Activated CD4-positive, alpha-beta T cell treated with anti-CD3 and anti-CD28 coated beads, Interleukin-2, amount 10 ng/mL, durations not matched to agents 24 days and 14 days (primary cell): ENCODE measurements at regions of chr1 and their contacts with region 1.

Region 1: DNA sequence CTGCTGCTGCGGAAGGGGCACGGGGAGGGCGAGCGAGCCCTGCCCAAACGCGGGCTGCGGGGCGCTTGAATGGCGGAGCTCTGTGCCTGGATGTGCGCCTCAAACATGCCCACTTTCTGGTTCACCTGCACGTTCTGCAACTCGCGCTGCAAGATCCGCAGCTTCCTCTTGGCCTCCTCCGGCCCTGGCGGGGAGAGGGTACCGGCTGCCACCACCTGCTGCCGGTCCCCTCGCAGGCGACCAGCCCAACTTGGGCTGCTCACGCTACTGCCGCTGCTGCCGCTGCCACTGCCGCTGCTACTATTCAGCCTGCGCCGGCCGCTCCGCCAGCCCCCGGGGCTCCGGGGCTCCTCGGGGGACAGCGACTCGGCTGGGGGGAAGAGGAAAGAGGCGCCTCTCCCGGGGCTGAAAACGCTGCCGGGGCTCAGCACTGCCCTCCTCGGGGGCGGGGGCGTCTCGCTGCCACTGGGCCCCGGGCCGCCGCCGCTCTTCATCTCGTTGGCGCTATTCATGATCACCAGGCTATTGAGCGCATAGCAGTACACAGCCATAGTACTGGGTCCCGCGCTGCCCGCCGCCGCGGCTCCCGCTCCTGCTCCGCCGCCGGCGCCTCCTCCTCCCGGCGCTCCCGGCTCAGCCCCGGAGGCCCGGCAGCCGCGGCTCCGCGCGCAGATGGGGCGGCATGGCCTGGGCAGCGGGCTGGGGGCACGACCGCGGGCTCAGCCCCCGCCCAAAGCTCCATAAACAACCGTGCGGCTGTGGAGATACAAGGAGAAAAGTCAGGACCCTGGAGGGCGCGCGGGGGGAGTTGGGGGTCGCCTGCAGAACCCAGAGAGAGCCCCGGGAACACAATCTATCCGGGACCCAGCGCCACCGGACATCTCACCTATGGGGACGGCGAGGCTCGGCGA is 1.9 kb downstream of the ITPKB start:
- DNase-seq: peak; percentile 86
- H3K4me3 Mint-ChIP-seq: peak overlapping the region; percentile 84
- H3K27ac Mint-ChIP-seq: peak overlapping the region; percentile 94
- H3K4me1 Mint-ChIP-seq: peaks cover 45% of the 10 kb centered on the region
- H3K27me3 Mint-ChIP-seq: no peaks in the 10 kb centered on the region

Region 2: DNA sequence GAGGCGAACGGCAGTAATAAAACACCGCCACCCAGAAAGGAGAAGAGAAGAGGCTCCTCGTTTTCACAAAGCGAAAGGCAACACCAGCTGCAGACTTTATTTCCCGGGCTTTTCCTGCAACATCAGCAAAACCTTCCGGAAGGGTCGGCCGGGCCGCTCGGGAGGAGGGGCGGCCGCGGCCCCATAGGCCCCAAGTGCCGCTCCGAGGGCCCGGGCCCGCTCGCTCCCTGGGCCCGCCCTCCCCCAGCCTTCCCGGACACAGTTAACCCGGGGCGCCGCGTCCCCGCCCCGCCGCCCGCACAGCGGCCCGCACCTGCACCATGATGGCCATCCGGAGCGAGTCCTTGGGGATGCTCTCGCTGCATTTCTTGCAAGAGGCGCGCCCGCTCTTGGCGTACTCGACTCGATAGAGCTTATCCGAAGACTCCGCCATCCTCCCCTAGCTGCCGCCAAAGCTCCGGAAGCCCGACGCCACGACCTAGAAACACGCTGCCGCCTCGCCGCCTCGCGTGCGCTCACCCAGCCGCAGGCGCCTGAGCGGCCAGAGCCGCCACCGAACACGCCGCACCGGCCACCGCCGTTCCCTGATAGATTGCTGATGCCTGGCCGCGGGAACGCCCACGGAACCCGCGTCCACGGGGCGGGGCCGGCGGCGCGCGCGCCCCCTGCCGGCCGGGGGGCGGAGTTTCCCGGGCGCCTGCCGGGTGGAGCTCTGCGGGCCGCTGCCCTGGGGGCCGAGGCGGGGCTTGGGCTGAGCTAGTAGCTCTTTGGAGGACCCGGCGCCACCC is 329.5 kb before region 1 on chr1 and contains the start of gene PARP1:
- intact Hi-C with region 1: loop called (anchors 10 kb)
- DNase-seq: peak; percentile 97
- H3K4me3 Mint-ChIP-seq: peak within 1 kb of the TSS; percentile 100
- H3K27ac Mint-ChIP-seq: peak within 1 kb of the TSS; percentile 98
- H3K4me1 Mint-ChIP-seq: peaks cover 37% of the 10 kb centered on the region
- H3K27me3 Mint-ChIP-seq: peaks cover 8% of the 10 kb centered on the region
- total RNA-seq, gene PARP1: 215 and 222 TPM in 2 replicates

Region 3: DNA sequence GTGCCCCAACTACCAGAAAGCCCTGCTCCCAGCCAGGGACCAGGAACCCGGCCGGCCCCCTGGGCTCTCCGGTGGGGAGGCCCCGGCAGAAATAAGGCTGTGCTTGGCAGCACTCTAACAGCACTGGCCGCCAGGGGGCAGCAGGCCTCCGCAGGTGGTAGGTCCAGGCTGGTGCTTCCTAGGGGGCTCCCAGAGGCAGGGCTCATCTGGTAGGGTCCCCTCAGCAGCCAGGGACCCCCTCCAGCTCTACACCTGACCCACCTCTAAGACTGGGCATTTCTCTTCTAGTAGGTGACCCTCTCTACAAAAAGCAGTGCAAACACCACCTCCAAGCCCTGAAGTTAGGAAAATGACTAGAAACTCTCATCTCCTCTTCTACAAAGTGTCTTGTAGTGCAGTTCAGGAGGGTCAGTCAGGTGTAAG is 103.0 kb before region 1 on chr1:
- intact Hi-C with region 1: loop called (anchors 2 kb)
- DNase-seq: peak; percentile 93
- H3K4me3 Mint-ChIP-seq: peak overlapping the region; percentile 33
- H3K27ac Mint-ChIP-seq: peak overlapping the region; percentile 5
- H3K4me1 Mint-ChIP-seq: peaks cover 40% of the 10 kb centered on the region
- H3K27me3 Mint-ChIP-seq: no peaks in the 10 kb centered on the region

Region 4: GRCh38 chr1:226687426-226687825 is 49.7 kb before region 1 on chr1:
- intact Hi-C with region 1: loop called (anchors 1 kb)
- DNase-seq: no peak
- H3K4me3 Mint-ChIP-seq: peak overlapping the region; percentile 23
- H3K27ac Mint-ChIP-seq: peak overlapping the region; percentile 83
- H3K4me1 Mint-ChIP-seq: peaks cover 89% of the 10 kb centered on the region
- H3K27me3 Mint-ChIP-seq: no peaks in the 10 kb centered on the region

Region 5: DNA sequence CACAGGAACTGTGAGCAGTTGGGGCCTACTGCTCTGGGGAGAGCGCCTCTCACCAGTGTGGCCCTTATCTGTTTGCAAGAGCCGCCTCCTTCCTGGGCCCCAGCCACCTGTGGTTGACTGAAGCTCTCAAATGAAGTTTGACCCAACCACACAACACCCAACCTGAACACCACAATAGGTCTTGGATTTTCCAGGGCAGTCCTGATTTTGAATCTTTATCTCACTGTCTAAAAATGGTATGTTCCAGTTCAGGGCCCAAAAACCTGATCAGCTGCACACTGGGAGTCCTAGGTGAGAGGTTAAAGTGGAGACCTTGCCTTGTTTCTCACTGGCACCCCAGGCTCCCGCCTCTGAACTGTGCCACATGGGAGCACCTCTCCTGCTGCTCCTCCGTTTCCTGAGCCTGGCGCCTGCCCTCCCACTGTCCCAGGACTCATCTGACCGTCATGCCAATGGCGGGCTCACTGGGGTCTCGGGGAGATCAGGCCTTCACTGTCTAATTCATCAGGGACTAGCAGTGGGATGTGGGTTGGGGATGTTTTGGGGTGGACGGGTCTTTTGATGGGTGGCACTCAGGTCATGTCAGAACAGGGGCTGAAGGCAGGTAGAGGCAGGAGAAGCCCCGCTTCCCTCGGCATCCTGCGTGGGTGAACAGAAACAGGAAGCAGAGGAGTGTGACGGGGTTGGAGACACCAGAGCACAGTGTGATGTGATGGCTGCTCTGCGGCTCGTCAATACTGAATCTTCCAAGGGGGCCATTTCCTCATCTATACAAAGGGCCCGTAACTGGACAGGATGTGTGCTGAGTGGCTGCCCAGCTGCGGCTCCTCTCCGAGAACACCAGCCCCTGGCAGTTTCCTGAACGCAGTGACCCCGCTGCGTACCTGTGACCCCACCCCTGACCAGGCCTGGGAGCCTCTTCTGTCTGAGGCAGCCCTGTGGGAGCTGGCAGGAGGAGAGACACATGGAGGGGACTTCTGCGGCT is 61.6 kb after region 1 on chr1:
- intact Hi-C with region 1: loop called (anchors 1 kb)
- DNase-seq: peak; percentile 89
- H3K4me3 Mint-ChIP-seq: peak overlapping the region; percentile 69
- H3K27ac Mint-ChIP-seq: peak overlapping the region; percentile 94
- H3K4me1 Mint-ChIP-seq: peaks cover 30% of the 10 kb centered on the region
- H3K27me3 Mint-ChIP-seq: peaks cover 12% of the 10 kb centered on the region

Region 6: GRCh38 chr1:226940029-226940805 is 203.1 kb after region 1 on chr1 and contains the start of gene COQ8A:
- intact Hi-C with region 1: loop called (anchors 1 kb)
- DNase-seq: peak; percentile 100
- H3K4me3 Mint-ChIP-seq: peak within 1 kb of the TSS; percentile 93
- H3K27ac Mint-ChIP-seq: peak within 1 kb of the TSS; percentile 99
- H3K4me1 Mint-ChIP-seq: peaks cover 42% of the 10 kb centered on the region
- H3K27me3 Mint-ChIP-seq: no peaks in the 10 kb centered on the region
- total RNA-seq, gene COQ8A: 27.0 and 35.3 TPM in 2 replicates